ENCODE measurements at regions of chr20 and their contacts with region 1.

Region 1: DNA sequence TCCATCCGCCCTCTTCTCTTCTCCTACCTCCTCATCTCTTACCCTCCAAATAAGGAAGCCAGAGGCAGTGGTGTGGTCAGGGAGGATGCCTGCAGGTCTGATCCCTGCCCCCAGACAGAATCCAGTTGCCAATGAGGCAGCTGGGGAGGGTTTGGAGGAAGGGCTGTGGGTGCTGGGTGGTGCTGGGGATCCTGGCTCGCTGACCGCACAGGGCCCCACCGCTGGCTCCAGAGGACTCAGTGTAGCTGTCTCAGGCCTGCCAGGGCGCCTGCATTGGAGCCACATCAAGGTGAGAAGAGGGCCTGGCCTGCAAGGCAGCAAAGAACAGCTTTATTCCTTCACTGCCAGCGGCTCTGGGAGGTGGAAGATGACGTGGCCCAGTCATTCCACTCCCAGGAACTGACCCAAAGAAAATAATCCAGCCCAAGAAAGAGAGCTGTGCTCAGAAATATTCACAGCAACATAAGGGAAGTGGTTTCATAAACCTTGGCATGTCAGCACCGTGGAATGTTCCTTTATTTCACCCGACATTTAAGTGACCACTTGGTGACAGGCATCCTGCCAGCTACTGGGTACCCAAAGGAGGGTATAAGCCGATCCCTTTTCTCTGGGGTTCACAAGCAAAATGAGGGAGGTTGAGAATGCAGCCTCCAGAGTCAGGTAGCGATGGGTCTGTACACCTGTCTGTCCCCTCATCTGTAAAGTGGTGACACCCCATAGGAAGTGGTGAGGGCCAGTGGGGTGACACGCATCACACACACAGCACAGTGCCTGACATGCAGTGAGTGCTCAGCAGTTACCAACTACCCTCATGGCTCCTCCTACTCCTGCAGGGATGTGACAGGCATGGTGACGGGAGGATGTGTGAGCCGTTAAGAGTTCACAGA is 125.1 kb downstream of the SNX5 start:
- DNase-seq: no peak
- H3K4me3 ChIP-seq: no peak overlapping the region
- H3K27ac ChIP-seq: peak overlapping the region; percentile 81 to 88 (median 86)
- H3K4me1 ChIP-seq: peaks cover 14 to 46% (median 40%) of the 10 kb centered on the region in 4 donors
- H3K27me3 ChIP-seq: no peaks in the 10 kb centered on the region
- CTCF ChIP-seq: no peak
- EP300 ChIP-seq: no peak
- POLR2A ChIP-seq: no peak

Region 2: GRCh38 chr20:17873410-17874270 is 30.2 kb after region 1 on chr20:
- intact Hi-C with region 1: loop called (anchors 2 kb)
- DNase-seq: no peak
- H3K4me3 ChIP-seq: peak overlapping the region in 2 of 4 donors; percentile 12 to 35
- H3K27ac ChIP-seq: peak overlapping the region; percentile 58 to 81 (median 76)
- H3K4me1 ChIP-seq: peaks cover 30 to 46% (median 42%) of the 10 kb centered on the region in 4 donors
- H3K27me3 ChIP-seq: no peaks in the 10 kb centered on the region
- CTCF ChIP-seq: no peak
- EP300 ChIP-seq: no peak
- POLR2A ChIP-seq: no peak

Region 3: GRCh38 chr20:18108326-18108725 is 264.8 kb after region 1 on chr20:
- intact Hi-C with region 1: no loop called
- DNase-seq: no peak
- H3K4me3 ChIP-seq: no peak overlapping the region
- H3K27ac ChIP-seq: no peak overlapping the region
- H3K4me1 ChIP-seq: no peaks in the 10 kb centered on the region
- H3K27me3 ChIP-seq: no peaks in the 10 kb centered on the region
- CTCF ChIP-seq: no peak
- EP300 ChIP-seq: no peak
- POLR2A ChIP-seq: no peak